Calu3 (cell line): ENCODE measurements at regions of chr1 and their contacts with region 1.

Region 1: GRCh38 chr1:155063550-155064110 is at the start of gene EFNA4:
- DNase-seq: peak; percentile 90
- H3K4me3 Mint-ChIP-seq: peak within 1 kb of the TSS; percentile 76
- H3K27ac Mint-ChIP-seq: peak within 1 kb of the TSS; percentile 89
- H3K4me1 Mint-ChIP-seq: peaks cover 30% of the 10 kb centered on the region
- H3K27me3 Mint-ChIP-seq: no peaks in the 10 kb centered on the region
- CTCF ChIP-seq: no peak
- total RNA-seq, gene EFNA4: 12.6 and 13.9 TPM in 2 replicates

Region 2: DNA sequence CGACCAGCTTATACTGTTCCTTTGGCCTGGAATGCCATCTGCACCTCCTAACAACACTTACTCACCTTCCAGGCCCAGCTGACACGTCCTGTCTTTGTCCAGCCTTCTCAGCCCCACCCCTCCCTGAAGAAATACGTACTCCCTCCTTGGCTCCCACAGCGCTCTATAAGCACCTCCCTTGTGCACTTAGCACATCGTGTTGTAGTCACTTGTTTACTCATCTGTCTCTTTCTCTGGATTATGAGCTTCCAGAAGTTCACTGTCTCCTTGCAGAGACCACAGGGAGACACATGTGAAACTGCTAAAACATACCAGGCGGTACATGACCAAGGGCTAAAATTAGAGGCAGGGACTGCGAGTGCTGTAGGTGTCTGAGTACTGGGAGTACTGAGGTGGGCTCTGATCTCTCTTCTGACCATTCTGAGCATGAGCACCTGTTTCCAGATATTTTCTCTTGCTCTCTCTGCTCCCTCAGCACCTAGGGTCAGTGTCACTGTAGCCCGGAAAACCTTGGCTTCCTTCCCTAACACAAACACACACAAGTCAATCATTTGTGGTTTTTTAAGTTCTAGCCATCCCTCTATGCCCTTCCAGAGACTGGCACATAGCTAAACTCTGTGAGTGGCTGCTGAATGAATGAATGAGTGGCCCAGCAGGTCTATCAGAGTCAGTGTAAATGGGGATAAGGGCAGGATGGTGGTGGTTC is 24.9 kb before region 1 on chr1:
- CTCF ChIA-PET with region 1: no interaction called
- intact Hi-C with region 1: no loop called
- DNase-seq: no peak
- H3K4me3 Mint-ChIP-seq: no peak overlapping the region
- H3K27ac Mint-ChIP-seq: no peak overlapping the region
- H3K4me1 Mint-ChIP-seq: peaks cover 22% of the 10 kb centered on the region
- H3K27me3 Mint-ChIP-seq: peaks cover 17% of the 10 kb centered on the region
- CTCF ChIP-seq: no peak

Region 3: DNA sequence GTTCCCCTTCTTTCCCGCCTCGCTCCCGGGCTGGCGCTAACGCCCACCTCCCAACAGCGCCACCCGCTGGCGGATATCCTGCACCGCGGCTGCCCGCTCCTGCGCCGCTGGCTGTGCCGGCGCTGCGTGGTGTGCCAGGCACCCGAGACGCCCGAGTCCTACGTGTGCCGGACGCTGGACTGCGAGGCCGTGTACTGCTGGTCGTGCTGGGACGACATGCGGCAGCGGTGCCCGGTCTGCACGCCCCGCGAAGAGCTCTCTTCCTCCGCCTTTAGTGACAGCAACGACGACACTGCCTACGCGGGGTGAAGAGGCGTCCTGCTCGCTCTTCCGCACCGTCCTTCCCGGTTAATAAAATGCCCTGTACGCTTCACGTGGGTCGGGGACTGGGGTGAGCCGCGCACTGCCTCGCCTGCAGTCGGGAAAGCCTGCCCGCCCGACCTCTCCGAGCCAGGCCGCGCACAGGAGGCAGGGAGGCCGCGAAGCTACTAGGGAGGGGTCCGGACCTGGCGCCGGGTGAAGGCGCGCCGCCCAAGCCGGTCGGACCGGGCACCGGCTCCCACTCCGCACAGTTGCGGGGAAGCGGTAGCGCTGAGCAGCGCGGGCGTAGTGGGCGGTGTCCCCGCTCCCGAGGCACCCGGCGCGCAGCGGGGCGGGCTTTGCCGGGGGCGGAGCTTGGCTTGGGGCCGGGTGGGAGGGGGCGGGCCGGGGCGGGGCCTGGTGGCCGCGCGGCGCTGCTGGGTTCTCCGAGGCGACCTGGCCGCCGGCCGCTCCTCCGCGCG is 12.9 kb before region 1 on chr1 and contains the start of gene ADAM15:
- CTCF ChIA-PET with region 1: interaction called, 11 read pairs
- intact Hi-C with region 1: no loop called
- DNase-seq: peak; percentile 94
- H3K4me3 Mint-ChIP-seq: peak within 1 kb of the TSS; percentile 91
- H3K27ac Mint-ChIP-seq: peak within 1 kb of the TSS; percentile 68
- H3K4me1 Mint-ChIP-seq: peaks cover 26% of the 10 kb centered on the region
- H3K27me3 Mint-ChIP-seq: no peaks in the 10 kb centered on the region
- CTCF ChIP-seq: peak; percentile 97
- total RNA-seq, gene ADAM15: 99.1 and 103 TPM in 2 replicates

Region 4: GRCh38 chr1:155105604-155106022 is 42.0 kb after region 1 on chr1:
- CTCF ChIA-PET with region 1: no interaction called
- intact Hi-C with region 1: no loop called
- DNase-seq: no peak
- H3K4me3 Mint-ChIP-seq: no peak overlapping the region
- H3K27ac Mint-ChIP-seq: no peak overlapping the region
- H3K4me1 Mint-ChIP-seq: no peaks in the 10 kb centered on the region
- H3K27me3 Mint-ChIP-seq: peaks cover 23% of the 10 kb centered on the region
- CTCF ChIP-seq: no peak